CD8-positive, alpha-beta T cell (primary cell): ENCODE measurements at regions of chr12 and their contacts with region 1.

Region 1: DNA sequence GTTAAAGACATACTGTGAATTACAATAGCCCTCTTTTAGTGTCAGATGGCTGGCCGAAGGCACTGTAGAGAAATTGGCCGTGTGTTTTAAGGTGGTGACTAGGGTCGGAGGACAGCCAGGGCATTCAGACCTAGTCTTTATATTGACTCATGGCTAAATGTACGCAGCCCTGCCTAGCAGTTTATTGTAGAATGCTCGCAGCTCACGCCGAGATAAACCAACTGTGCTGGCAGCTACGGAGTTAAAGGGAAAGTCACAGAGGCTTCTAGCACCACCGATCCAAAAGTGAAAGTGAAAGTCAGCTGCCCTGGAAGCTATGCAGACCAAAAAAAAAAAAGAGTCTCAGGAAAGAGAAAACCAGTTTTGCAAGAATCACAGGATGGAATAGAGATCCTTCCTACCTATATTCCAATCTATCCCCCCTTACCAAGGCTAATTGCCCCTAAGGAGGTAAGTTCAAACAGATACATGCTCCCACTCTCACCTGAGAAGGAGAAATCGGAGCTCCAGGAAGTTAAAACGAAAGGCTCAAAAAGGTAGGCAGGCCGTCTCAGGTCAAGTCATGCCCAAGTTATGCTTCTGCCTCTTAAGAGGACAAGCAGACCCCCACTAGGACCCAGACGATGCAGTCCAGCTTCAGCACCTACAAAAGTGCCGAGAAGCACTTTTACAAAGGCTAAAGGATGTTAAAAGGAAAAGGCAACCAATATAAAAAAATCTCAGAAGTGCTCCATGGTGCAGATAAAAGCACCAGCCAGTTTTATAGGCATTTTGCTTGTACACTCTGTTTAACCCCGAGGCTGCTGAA is 24.8 kb downstream of the KLRK1 start:
- DNase-seq: peak in 7 of 9 experiments; percentile 40 to 93 (median 70)
- ATAC-seq: peak; percentile 66
- H3K4me3 ChIP-seq: peak overlapping the region; percentile 60 to 77
- H3K4me3 Mint-ChIP-seq: no peak overlapping the region
- H3K27ac ChIP-seq: peak overlapping the region; percentile 71 to 86
- H3K27ac Mint-ChIP-seq: no peak overlapping the region
- H3K4me1 ChIP-seq: peaks cover 83% of the 10 kb centered on the region
- H3K4me1 Mint-ChIP-seq: peaks cover 36% of the 10 kb centered on the region
- H3K27me3 ChIP-seq: no peaks in the 10 kb centered on the region
- H3K27me3 Mint-ChIP-seq: no peaks in the 10 kb centered on the region
- CTCF ChIP-seq: no peak

Region 2: GRCh38 chr12:10235761-10236631 is 129.0 kb before region 1 on chr12:
- CTCF ChIA-PET with region 1: interaction called, 33 read pairs
- POLR2A ChIA-PET with region 1: interaction called, 3 read pairs
- intact Hi-C with region 1: loop called in 1 of 2 experiments (anchors 2 kb)
- DNase-seq: peak in 8 of 9 experiments; percentile 26 to 80 (median 54)
- ATAC-seq: peak; percentile 78
- H3K4me3 ChIP-seq: no peak overlapping the region
- H3K4me3 Mint-ChIP-seq: no peak overlapping the region
- H3K27ac ChIP-seq: peak overlapping the region in 1 of 2 experiments; percentile 56
- H3K27ac Mint-ChIP-seq: peak overlapping the region; percentile 73
- H3K4me1 ChIP-seq: peaks cover 6% of the 10 kb centered on the region
- H3K4me1 Mint-ChIP-seq: peaks cover 18% of the 10 kb centered on the region
- H3K27me3 ChIP-seq: no peaks in the 10 kb centered on the region
- H3K27me3 Mint-ChIP-seq: no peaks in the 10 kb centered on the region
- CTCF ChIP-seq: peak; percentile 90

Region 3: GRCh38 chr12:10395390-10395998 is 30.5 kb after region 1 on chr12:
- CTCF ChIA-PET with region 1: no interaction called
- POLR2A ChIA-PET with region 1: interaction called, 29 read pairs
- intact Hi-C with region 1: loop called in 1 of 2 experiments (anchors 5 kb)
- DNase-seq: peak in 3 of 9 experiments; percentile 32 to 89 (median 78)
- ATAC-seq: peak; percentile 66
- H3K4me3 ChIP-seq: peak overlapping the region; percentile 30 to 37
- H3K4me3 Mint-ChIP-seq: peak overlapping the region; percentile 63
- H3K27ac ChIP-seq: peak overlapping the region; percentile 95 to 97
- H3K27ac Mint-ChIP-seq: peak overlapping the region; percentile 96
- H3K4me1 ChIP-seq: peaks cover 88% of the 10 kb centered on the region
- H3K4me1 Mint-ChIP-seq: peaks cover 68% of the 10 kb centered on the region
- H3K27me3 ChIP-seq: no peaks in the 10 kb centered on the region
- H3K27me3 Mint-ChIP-seq: no peaks in the 10 kb centered on the region
- CTCF ChIP-seq: no peak

Region 4: DNA sequence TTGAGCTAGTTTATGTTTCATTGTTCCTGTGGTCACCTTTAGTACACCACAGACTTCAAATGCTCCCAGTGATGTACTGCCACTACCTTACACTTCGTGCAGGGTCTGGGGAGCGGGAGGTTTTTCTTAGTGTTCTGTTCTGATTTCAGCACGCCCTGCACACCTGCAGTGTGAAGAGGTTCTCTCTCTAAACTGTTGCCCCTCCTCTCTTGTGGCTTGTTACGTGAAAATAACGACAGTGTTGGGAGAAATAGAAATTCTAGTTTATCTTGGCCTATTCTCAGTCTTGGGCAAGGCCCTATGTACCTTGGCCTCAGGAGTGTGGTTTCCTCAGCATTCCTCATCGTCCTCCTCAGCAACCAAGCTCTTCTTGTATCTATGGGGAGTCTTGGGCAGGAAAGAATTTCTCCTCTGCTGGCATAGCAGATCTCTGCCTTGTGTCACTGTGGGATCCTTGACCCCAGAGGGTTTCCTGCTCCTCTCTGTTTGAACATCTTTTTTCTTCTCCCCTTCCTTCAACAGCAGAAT is 189.3 kb after region 1 on chr12:
- CTCF ChIA-PET with region 1: interaction called, 17 read pairs
- POLR2A ChIA-PET with region 1: interaction called, 32 read pairs
- intact Hi-C with region 1: no loop called
- DNase-seq: peak in 8 of 9 experiments; percentile 29 to 85 (median 70)
- ATAC-seq: peak; percentile 64
- H3K4me3 ChIP-seq: peak overlapping the region; percentile 61 to 64
- H3K4me3 Mint-ChIP-seq: peak overlapping the region; percentile 90
- H3K27ac ChIP-seq: peak overlapping the region; percentile 80 to 95
- H3K27ac Mint-ChIP-seq: peak overlapping the region; percentile 100
- H3K4me1 ChIP-seq: peaks cover 32% of the 10 kb centered on the region
- H3K4me1 Mint-ChIP-seq: peaks cover 61% of the 10 kb centered on the region
- H3K27me3 ChIP-seq: no peaks in the 10 kb centered on the region
- H3K27me3 Mint-ChIP-seq: no peaks in the 10 kb centered on the region
- CTCF ChIP-seq: no peak

Region 5: GRCh38 chr12:10673660-10674384 is 308.8 kb after region 1 on chr12 and contains the start of gene STYK1:
- CTCF ChIA-PET with region 1: interaction called, 6 read pairs
- POLR2A ChIA-PET with region 1: no interaction called
- intact Hi-C with region 1: loop called (anchors 1 to 2 kb)
- DNase-seq: peak; percentile 64 to 89 (median 76)
- ATAC-seq: peak; percentile 72
- H3K4me3 ChIP-seq: peak within 1 kb of the TSS; percentile 41 to 57
- H3K4me3 Mint-ChIP-seq: peak within 1 kb of the TSS; percentile 82
- H3K27ac ChIP-seq: peak within 1 kb of the TSS; percentile 50 to 75
- H3K27ac Mint-ChIP-seq: peak within 1 kb of the TSS; percentile 92
- H3K4me1 ChIP-seq: peaks cover 25% of the 10 kb centered on the region
- H3K4me1 Mint-ChIP-seq: peaks cover 43% of the 10 kb centered on the region
- H3K27me3 ChIP-seq: no peaks in the 10 kb centered on the region
- H3K27me3 Mint-ChIP-seq: peaks cover 7% of the 10 kb centered on the region
- CTCF ChIP-seq: peak; percentile 95
- total RNA-seq, gene STYK1: 0.57 to 0.89 TPM

Region 6: DNA sequence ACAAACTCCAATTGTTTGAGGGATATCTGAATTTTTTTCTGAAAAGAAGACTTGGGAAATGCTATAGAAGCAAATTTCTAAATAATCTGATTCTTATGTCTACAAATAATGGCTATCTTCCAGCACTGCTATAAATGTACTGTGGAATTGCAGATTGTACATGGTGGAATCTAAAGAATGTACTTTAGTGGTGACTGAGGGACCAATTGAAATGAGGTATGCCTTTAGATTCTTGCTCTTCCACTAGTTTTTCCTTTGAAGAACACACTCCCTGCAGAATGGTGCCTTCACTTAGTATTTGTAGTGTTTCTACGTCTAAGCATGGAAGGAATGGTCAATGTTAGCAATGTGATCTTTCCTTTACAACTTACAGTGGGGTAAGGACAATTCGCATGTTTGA is 957.0 kb after region 1 on chr12:
- CTCF ChIA-PET with region 1: no interaction called
- POLR2A ChIA-PET with region 1: no interaction called
- intact Hi-C with region 1: no loop called
- DNase-seq: no peak
- ATAC-seq: no peak
- H3K4me3 ChIP-seq: no peak overlapping the region
- H3K4me3 Mint-ChIP-seq: no peak overlapping the region
- H3K27ac ChIP-seq: no peak overlapping the region
- H3K27ac Mint-ChIP-seq: no peak overlapping the region
- H3K4me1 ChIP-seq: no peaks in the 10 kb centered on the region
- H3K4me1 Mint-ChIP-seq: no peaks in the 10 kb centered on the region
- H3K27me3 ChIP-seq: no peaks in the 10 kb centered on the region
- H3K27me3 Mint-ChIP-seq: no peaks in the 10 kb centered on the region
- CTCF ChIP-seq: no peak